ENCODE measurements at regions of chr11 and their contacts with region 1.

Region 1: DNA sequence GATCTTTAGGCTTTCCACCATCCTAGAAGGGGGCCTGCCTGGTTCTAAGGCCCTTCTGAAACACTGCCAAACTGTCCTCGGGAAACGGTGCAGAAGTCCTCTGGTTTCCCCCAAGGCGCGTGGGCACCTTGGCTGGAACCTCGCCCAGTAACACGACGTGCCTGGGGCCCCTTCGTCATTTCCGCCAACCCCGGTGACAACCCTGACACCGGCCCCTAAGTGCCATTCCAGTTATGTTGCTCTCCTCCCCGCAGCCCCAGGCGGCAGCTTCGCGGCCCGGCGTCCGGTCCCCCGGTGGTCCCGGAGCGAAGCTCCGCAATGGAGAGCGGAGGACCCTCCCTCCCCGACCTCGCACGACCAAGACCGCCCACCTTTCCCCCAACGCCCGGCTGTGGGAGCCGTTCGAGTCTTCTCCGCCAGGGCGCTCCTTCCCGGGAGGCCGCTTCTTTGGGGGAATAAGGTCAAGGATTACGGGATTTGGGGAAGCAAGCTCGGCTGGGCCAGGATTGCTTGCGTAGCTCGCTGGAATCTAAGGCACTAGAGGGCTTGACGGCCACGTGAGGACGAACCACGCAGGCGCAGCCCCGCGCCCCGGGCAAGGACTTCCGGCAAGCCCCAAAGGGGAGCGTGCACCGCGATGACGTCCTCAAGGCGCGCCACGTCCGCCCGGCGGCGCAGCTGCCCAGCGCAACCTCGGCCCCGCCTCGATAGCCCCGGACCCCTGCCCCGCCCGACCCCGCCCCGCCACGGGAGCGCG is 626 bp downstream of the RNH1 start:
- DNase-seq: peak; percentile 96
- H3K4me3 Mint-ChIP-seq: peak overlapping the region; percentile 95
- H3K27ac Mint-ChIP-seq: peak overlapping the region; percentile 99
- H3K4me1 Mint-ChIP-seq: peaks cover 17% of the 10 kb centered on the region
- H3K27me3 Mint-ChIP-seq: no peaks in the 10 kb centered on the region

Region 2: DNA sequence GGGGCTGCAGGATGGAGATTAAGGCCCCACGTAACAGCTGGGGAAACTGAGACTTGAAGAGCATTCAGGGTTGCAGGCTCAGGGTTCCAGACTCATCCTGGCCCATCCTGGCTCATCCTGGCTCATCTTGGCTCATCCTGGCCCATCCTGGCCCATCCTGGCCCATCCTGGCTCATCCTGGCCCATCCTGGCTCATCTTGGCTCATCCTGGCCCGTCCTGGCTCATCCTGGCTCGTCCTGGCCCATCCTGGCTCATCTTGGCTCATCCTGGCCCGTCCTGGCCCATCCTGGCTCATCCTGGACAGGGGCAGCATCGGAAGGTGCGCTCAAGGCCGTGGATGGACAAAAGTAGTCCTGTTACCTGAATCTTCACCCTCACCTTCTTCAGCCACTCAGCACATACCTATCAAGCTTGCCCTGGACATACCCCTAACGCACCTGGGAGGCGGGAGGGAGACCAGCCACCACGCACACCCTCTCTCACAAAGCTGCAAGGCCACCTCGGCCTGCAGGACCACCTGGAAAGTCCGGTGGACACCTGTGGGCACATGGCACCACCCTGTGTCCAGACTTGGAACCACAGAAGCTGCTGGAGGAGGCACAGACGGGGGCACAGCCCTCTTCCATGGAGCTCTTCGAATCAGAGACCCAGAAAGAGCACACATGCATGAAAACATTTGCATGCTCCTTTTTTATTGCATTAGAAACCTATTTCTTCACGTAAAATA is 248.5 kb before region 1 on chr11:
- intact Hi-C with region 1: no loop called
- DNase-seq: no peak
- H3K4me3 Mint-ChIP-seq: no peak overlapping the region
- H3K27ac Mint-ChIP-seq: no peak overlapping the region
- H3K4me1 Mint-ChIP-seq: peaks cover 2% of the 10 kb centered on the region
- H3K27me3 Mint-ChIP-seq: peaks cover 7% of the 10 kb centered on the region

Region 3: GRCh38 chr11:396948-397548 is 109.4 kb before region 1 on chr11:
- intact Hi-C with region 1: no loop called
- DNase-seq: no peak
- H3K4me3 Mint-ChIP-seq: no peak overlapping the region
- H3K27ac Mint-ChIP-seq: no peak overlapping the region
- H3K4me1 Mint-ChIP-seq: no peaks in the 10 kb centered on the region
- H3K27me3 Mint-ChIP-seq: peaks cover 7% of the 10 kb centered on the region

Region 4: GRCh38 chr11:447923-448731 is 58.3 kb before region 1 on chr11:
- intact Hi-C with region 1: loop called (anchors 1 kb)
- DNase-seq: peak; percentile 91
- H3K4me3 Mint-ChIP-seq: peak overlapping the region; percentile 86
- H3K27ac Mint-ChIP-seq: peak overlapping the region; percentile 93
- H3K4me1 Mint-ChIP-seq: peaks cover 12% of the 10 kb centered on the region
- H3K27me3 Mint-ChIP-seq: peaks cover 3% of the 10 kb centered on the region

Region 5: DNA sequence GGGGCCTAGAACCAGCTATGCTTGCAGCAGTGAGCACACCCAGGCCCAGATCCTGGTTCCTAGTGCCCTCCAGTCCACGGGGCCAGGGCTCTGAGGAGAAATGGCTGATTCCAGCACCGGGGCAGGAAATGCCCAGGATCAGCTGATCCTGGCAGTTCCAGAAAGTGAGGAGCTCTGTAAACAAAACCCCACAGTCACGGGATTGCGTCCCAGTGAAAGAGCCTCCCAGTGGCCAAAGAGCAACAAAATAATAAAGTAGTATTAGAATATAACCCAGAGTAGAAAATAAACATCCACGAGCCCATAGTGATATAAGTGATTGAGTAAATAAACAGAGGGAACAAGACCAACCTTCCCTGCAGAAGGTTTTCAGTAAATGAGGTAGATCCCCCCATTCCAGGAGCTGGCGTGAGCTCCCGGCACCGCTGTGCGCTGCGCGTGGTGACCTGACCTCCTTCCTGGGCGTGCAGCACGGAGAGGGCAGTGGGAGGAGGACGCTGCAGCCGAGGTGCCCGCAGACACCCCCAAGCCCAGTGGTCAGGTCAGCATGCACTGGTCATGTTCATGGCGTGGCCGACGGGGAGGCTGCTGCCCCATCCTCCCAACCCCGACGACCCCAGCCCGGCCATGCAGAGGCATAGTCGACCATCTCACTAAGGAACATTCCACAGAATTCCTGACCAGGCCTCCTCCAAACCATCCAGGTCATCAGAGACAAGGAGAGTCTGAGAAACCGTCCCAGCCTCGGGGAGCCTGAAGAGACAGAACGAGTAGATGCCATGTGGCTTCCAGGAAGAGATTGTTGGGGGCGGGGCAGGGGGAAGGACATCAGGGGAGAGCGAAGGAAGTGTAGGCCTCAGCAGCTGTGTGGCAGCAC is 36.5 kb before region 1 on chr11:
- intact Hi-C with region 1: no loop called
- DNase-seq: no peak
- H3K4me3 Mint-ChIP-seq: no peak overlapping the region
- H3K27ac Mint-ChIP-seq: no peak overlapping the region
- H3K4me1 Mint-ChIP-seq: no peaks in the 10 kb centered on the region
- H3K27me3 Mint-ChIP-seq: no peaks in the 10 kb centered on the region

Region 6: DNA sequence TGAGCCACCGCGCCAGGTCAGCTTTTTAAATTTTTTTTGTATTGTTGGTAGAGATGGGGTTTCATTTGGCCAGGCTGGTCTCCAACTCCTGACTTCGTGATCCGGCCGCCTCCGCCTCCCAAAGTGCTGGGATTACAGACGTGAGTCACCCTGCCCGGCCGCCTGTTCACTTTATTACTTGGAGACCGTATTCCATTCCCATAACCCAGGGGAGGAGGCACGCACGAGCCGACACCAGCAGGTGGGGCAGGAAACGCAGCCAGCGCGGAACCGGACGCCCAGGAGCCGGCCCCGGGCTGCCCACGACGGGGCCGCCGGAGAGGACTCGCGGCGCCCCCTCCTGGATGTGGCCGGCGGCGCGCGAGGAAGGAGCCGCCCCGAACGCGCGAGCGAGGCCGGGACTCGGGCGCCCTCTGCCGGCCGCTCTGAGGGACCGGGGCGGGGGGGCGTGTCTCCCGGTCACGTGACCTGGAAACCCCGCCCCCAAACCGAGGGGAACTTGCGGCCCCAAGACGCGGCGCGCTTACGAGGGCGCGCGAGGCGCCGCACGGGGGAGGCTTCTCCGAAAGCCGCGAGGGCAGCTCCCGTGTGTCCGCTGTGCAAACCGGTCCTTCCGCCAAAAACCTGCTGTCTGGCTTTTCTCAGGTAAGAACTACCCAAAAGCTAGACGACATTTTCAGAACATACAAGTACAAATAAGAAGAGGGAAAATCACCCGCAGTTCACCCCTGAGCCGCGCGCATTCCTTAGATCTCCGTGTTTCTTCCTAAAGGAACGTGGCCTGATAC is 12.2 kb after region 1 on chr11:
- intact Hi-C with region 1: loop called (anchors 1 kb)
- DNase-seq: peak; percentile 80
- H3K4me3 Mint-ChIP-seq: peak overlapping the region; percentile 74
- H3K27ac Mint-ChIP-seq: peak overlapping the region; percentile 60
- H3K4me1 Mint-ChIP-seq: peaks cover 3% of the 10 kb centered on the region
- H3K27me3 Mint-ChIP-seq: no peaks in the 10 kb centered on the region

Region 7: DNA sequence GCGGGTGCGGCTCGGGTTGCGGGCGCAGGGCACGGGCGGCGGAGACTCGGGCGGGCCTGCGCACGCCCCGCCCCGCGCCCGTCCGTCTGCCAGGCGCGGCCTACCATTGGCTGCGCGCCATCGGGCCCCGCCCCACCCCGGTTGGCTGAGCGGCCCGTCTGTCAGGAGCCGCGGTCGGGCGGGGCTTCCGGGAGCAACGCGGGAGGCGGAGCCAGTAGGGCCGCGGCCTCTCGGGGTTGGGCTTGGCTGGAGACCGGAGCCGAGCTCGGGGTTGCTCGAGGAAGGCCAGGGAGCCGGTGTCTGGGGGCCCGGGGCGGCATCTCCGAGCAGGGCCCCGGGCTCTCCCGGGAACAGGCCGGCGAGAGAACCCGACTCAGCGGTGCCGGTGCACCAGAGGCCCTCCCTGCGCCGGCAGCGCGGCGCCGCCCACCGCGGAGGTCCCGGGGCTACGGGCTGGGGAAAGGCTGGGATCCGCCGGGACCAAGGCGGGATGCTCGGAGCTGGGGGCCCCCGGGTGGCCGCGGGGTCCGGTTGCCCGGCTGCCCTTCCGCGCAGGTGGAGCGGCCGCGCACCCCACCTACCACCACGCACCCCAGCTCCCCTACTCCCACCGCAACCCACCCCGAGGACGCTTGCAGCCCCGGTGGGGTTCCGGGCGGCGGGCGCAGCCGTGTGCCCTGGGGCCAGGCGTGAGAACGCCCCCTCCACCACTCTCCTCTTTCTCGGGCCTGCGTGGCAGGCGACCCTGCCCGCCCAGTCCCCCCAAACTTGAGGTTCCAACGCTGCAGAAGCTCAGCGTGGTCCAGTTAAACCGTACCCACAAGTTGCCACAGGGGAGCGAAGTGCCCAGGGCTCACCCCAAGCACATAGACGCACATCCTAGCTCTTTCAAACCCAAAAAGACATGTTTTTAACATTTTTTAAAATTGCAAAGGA is 29.4 kb after region 1 on chr11 and contains the start of gene HRAS:
- intact Hi-C with region 1: loop called (anchors 1 kb)
- DNase-seq: peak; percentile 94
- H3K4me3 Mint-ChIP-seq: peak within 1 kb of the TSS; percentile 89
- H3K27ac Mint-ChIP-seq: peak within 1 kb of the TSS; percentile 82
- H3K4me1 Mint-ChIP-seq: peaks cover 2% of the 10 kb centered on the region
- H3K27me3 Mint-ChIP-seq: no peaks in the 10 kb centered on the region
- total RNA-seq, gene HRAS: 70.5 and 71.5 TPM in 2 replicates

Region 8: DNA sequence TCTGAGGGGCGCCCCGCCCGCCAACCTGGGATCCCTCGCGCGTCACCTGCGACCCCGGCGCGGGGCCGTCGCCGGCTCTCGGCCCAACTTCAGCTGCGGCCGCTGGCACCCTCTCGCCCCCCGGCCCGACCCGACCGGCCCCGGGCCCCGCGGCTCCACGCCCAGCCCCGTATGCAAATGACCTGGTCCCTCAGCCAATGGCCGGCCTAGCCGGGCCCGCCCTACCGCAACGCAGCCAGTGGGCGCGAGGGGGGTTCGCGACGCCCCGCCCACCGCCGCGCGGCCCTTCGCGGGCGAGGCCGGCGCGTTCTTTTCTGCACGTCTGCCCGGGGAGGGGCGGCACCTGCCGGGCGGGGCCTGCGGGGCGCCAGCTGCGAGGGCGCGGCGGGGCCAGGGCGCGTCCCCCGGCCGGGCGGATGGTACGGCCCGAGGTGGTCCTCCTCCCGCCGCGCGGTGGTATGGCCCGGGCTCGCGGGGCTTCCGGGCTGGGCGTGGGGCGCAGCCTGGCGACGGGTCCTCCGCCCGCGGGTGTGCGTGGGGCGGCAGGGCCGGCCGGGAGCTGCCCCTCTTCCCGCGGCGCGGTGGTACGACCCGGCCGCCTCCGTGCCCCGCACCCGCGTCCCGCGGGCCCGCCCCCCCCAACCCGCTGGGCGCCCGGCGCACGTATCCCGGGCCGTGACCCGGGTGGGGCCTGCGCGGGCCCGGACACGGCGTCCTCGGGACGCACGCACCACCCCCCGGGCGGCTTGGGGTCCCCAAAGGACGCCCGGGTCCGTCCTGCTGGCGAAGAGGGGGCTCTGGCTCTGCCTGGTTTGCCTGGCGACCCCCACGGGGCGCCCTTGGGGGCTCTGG is 62.1 kb after region 1 on chr11:
- intact Hi-C with region 1: loop called (anchors 2 kb)
- DNase-seq: peak; percentile 95
- H3K4me3 Mint-ChIP-seq: peak overlapping the region; percentile 75
- H3K27ac Mint-ChIP-seq: peak overlapping the region; percentile 33
- H3K4me1 Mint-ChIP-seq: peaks cover 4% of the 10 kb centered on the region
- H3K27me3 Mint-ChIP-seq: no peaks in the 10 kb centered on the region

Region 9: GRCh38 chr11:575996-576768 is 69.8 kb after region 1 on chr11 and contains the start of gene PHRF1:
- intact Hi-C with region 1: loop called (anchors 1 kb)
- DNase-seq: peak; percentile 93
- H3K4me3 Mint-ChIP-seq: peak within 1 kb of the TSS; percentile 98
- H3K27ac Mint-ChIP-seq: peak within 1 kb of the TSS; percentile 99
- H3K4me1 Mint-ChIP-seq: peaks cover 31% of the 10 kb centered on the region
- H3K27me3 Mint-ChIP-seq: peaks cover 5% of the 10 kb centered on the region
- total RNA-seq, gene PHRF1: 53.7 and 54.0 TPM in 2 replicates